GM12878 (cell line): ENCODE measurements at regions of chr14 and their contacts with region 1.

Region 1: DNA sequence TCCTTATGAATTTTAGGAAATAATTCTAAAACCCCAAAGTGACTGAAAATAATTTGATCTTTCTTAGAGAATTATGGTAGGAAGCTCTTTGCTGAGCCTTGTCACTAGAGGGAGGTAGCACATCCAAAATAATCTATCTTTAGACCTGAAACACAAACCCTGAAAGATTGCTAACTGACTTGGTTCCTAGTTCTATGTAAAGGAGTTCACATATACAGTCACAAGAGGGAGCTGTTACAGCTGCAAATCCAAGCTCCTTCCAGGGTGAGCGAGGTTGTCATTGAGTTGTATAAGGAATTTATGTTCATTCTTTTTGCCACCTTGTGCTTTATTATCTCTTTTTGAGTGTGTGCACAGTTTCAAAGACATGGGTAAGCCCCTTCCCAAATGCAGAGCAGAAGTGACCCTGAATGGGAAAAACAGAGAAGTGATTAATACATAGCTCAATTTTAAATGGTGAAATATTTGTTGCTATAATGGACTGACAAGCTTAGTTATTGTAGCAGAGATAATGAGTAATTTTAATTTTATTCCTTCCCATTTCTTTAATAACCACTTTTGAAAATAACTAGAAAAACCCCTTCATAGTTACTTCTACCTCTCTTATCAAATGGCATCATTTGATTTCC is 387.9 kb downstream of the DAD1 start:
- DNase-seq: peak; percentile 3
- ATAC-seq: peak; percentile 93
- H3K4me3 ChIP-seq: no peak overlapping the region
- H3K27ac ChIP-seq: no peak overlapping the region
- H3K4me1 ChIP-seq: no peaks in the 10 kb centered on the region
- H3K27me3 ChIP-seq: no peaks in the 10 kb centered on the region; a peak in 1 of 4 replicates
- CTCF ChIP-seq: peak; percentile 64 to 72 (median 65); a peak in 5 of 6 replicates
- EP300 ChIP-seq: no peak
- POLR2A ChIP-seq: no peak
- RAD21 ChIP-seq: peak; percentile 64

Region 2: DNA sequence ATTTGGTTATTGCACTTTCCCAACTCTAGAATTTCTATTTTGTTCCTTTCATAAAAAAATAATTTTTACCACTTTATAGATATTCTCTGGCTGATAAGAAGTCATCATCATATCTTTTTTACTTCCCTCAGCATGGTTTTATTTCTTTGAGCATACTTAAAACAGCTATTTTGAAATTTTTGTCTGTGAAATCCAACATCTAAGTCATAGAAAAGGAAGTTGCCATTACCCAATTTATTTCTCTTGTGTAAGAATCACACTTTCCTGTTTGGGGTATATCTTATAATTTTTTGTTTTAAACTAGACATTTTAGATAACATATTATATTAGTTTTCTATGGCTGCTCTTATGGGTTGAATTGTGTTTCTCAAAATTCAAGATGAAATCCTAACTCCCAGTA is 127.3 kb before region 1 on chr14:
- CTCF ChIA-PET with region 1: no interaction called
- POLR2A ChIA-PET with region 1: no interaction called
- RAD21 ChIA-PET with region 1: no interaction called
- SMC1A ChIA-PET with region 1: no interaction called
- in situ Hi-C with region 1: no loop called
- intact Hi-C with region 1: no loop called
- DNase-seq: no peak
- ATAC-seq: no peak
- H3K4me3 ChIP-seq: no peak overlapping the region
- H3K27ac ChIP-seq: no peak overlapping the region
- H3K4me1 ChIP-seq: peaks cover 10% of the 10 kb centered on the region
- H3K27me3 ChIP-seq: no peaks in the 10 kb centered on the region
- CTCF ChIP-seq: no peak
- EP300 ChIP-seq: no peak
- POLR2A ChIP-seq: no peak
- RAD21 ChIP-seq: no peak

Region 3: DNA sequence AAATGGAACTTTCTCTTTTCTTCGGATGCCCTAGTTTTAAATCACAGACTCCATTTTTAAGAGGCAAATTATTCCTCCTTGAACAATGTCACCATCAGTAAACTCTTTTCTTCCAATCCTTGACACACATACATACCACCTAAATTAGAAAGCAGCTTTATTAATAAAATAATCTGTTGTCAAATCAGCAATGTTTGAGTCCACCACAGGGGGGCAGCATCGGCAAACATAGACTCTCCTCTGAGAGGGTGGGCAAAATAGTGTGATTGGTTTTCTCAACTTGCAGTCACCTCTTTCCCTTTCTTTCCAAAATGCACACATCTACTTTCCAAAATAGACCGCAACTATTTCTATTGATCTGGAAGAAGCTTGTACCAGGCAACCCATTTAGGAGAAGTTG is 89.1 kb before region 1 on chr14:
- CTCF ChIA-PET with region 1: interaction called, 13 read pairs
- POLR2A ChIA-PET with region 1: no interaction called
- RAD21 ChIA-PET with region 1: no interaction called
- SMC1A ChIA-PET with region 1: no interaction called
- in situ Hi-C with region 1: no loop called
- intact Hi-C with region 1: no loop called
- DNase-seq: no peak
- ATAC-seq: peak; percentile 67
- H3K4me3 ChIP-seq: no peak overlapping the region
- H3K27ac ChIP-seq: no peak overlapping the region
- H3K4me1 ChIP-seq: peaks cover 3% of the 10 kb centered on the region; the same call in 1 of the 2 replicates
- H3K27me3 ChIP-seq: no peaks in the 10 kb centered on the region
- CTCF ChIP-seq: peak; percentile 37 to 63 (median 53); a peak in 5 of 6 replicates
- EP300 ChIP-seq: no peak
- POLR2A ChIP-seq: no peak
- RAD21 ChIP-seq: peak; percentile 60

Region 4: DNA sequence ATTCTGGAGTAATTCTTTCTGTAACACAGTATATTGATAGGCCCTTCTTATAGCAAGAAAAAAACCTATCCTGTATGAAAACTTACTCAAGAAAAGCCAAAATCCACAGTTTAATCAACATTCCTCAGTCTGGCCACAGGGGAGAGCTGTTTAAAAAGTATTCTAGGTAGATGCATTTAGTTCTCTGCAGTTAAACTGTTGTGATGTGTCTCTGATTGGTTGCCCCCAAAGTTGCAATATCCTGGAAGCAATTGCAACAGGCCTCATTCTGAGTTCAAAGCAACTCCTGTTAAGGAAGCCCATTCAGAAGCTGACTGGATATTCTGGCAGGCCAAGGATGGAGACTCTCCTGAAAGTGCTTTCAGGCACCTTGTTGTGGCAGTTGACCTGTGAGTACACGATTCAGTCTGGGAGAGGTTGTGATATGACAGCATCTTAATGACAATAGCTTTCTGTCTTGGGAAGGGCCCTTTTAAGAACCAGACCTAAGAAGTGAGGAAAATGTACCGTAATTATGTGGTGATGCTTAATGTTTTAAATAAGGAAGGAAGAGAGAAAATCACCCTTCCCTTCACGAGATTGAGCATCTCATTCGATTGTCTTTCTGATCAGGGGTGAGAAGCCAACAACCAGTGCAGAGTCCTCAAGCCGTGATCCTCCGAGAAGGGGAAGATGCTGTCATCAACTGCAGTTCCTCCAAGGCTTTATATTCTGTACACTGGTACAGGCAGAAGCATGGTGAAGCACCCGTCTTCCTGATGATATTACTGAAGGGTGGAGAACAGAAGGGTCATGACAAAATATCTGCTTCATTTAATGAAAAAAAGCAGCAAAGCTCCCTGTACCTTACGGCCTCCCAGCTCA is 32.8 kb before region 1 on chr14:
- CTCF ChIA-PET with region 1: interaction called, 25 read pairs
- POLR2A ChIA-PET with region 1: no interaction called
- RAD21 ChIA-PET with region 1: interaction called, 10 read pairs
- SMC1A ChIA-PET with region 1: interaction called, 24 read pairs
- in situ Hi-C with region 1: no loop called
- intact Hi-C with region 1: loop called (anchors 5 kb)
- DNase-seq: no peak
- ATAC-seq: peak; percentile 38; the same call in 1 of the 3 replicates
- H3K4me3 ChIP-seq: no peak overlapping the region
- H3K27ac ChIP-seq: no peak overlapping the region
- H3K4me1 ChIP-seq: no peaks in the 10 kb centered on the region
- H3K27me3 ChIP-seq: peaks cover 0 to 2% of the 10 kb centered on the region in 2 experiments; a peak in 1 of 4 replicates
- CTCF ChIP-seq: peak in 1 of 3 experiments; percentile 20; a peak in 2 of 6 replicates
- EP300 ChIP-seq: no peak
- POLR2A ChIP-seq: no peak
- RAD21 ChIP-seq: peak; percentile 23; the same call in 1 of the 2 replicates

Region 5: DNA sequence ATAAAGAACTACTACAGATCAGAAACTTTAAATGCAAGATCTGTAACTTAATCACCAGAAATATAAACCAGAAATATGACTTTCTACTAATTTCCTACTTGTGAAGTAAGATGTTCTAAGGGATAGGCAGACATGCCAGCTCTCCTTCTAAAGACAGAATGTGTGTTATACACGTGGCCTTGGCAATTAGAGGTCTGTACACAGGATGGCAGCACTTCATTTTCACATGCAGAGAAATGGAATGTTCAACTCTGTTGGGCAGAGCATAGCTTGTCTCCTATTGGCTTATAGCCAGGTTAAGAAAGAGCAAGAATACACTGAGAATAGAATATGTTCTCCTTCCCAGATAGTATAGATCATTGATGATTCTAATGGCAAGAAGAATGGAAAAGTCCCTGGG is 15.9 kb before region 1 on chr14:
- CTCF ChIA-PET with region 1: interaction called, 27 read pairs
- POLR2A ChIA-PET with region 1: no interaction called
- RAD21 ChIA-PET with region 1: interaction called, 3 read pairs
- SMC1A ChIA-PET with region 1: interaction called, 3 read pairs
- in situ Hi-C with region 1: no loop called
- intact Hi-C with region 1: no loop called
- DNase-seq: no peak
- ATAC-seq: peak; percentile 55
- H3K4me3 ChIP-seq: no peak overlapping the region
- H3K27ac ChIP-seq: no peak overlapping the region
- H3K4me1 ChIP-seq: no peaks in the 10 kb centered on the region
- H3K27me3 ChIP-seq: peaks cover 1 to 6% of the 10 kb centered on the region in 2 experiments; a peak in 1 of 4 replicates
- CTCF ChIP-seq: 0 out of 6 replicates have a peak, but pooled peaks of 1 of the 3 experiments have one; percentile 9
- EP300 ChIP-seq: no peak
- POLR2A ChIP-seq: no peak
- RAD21 ChIP-seq: no peak

Region 6: GRCh38 chr14:22276913-22277816 is 76.1 kb after region 1 on chr14:
- CTCF ChIA-PET with region 1: interaction called, 19 read pairs
- POLR2A ChIA-PET with region 1: no interaction called
- RAD21 ChIA-PET with region 1: interaction called, 8 read pairs
- SMC1A ChIA-PET with region 1: no interaction called
- in situ Hi-C with region 1: no loop called
- intact Hi-C with region 1: no loop called
- DNase-seq: no peak
- ATAC-seq: 0 out of 3 replicates have a peak, but pooled peaks have one; percentile 31
- H3K4me3 ChIP-seq: no peak overlapping the region
- H3K27ac ChIP-seq: no peak overlapping the region
- H3K4me1 ChIP-seq: no peaks in the 10 kb centered on the region
- H3K27me3 ChIP-seq: peaks cover 0 to 5% of the 10 kb centered on the region in 2 experiments; a peak in 3 of 4 replicates
- CTCF ChIP-seq: peak; percentile 53 to 69 (median 56)
- EP300 ChIP-seq: no peak
- POLR2A ChIP-seq: no peak
- RAD21 ChIP-seq: peak; percentile 49

Region 7: GRCh38 chr14:23120541-23121251 is 919.6 kb after region 1 on chr14:
- CTCF ChIA-PET with region 1: no interaction called
- POLR2A ChIA-PET with region 1: no interaction called
- RAD21 ChIA-PET with region 1: no interaction called
- SMC1A ChIA-PET with region 1: no interaction called
- in situ Hi-C with region 1: no loop called
- intact Hi-C with region 1: no loop called
- DNase-seq: peak; percentile 60
- ATAC-seq: peak; percentile 96
- H3K4me3 ChIP-seq: no peak overlapping the region; the same call in 1 of the 2 replicates
- H3K27ac ChIP-seq: peak overlapping the region; percentile 24; the same call in 1 of the 2 replicates
- H3K4me1 ChIP-seq: peaks cover 20% of the 10 kb centered on the region
- H3K27me3 ChIP-seq: no peaks in the 10 kb centered on the region; a peak in 2 of 4 replicates
- CTCF ChIP-seq: peak; percentile 100; a peak in 5 of 6 replicates
- EP300 ChIP-seq: no peak
- POLR2A ChIP-seq: no peak
- RAD21 ChIP-seq: peak; percentile 93